ENCODE measurements at regions of chr19 and their contacts with region 1.

Region 1: DNA sequence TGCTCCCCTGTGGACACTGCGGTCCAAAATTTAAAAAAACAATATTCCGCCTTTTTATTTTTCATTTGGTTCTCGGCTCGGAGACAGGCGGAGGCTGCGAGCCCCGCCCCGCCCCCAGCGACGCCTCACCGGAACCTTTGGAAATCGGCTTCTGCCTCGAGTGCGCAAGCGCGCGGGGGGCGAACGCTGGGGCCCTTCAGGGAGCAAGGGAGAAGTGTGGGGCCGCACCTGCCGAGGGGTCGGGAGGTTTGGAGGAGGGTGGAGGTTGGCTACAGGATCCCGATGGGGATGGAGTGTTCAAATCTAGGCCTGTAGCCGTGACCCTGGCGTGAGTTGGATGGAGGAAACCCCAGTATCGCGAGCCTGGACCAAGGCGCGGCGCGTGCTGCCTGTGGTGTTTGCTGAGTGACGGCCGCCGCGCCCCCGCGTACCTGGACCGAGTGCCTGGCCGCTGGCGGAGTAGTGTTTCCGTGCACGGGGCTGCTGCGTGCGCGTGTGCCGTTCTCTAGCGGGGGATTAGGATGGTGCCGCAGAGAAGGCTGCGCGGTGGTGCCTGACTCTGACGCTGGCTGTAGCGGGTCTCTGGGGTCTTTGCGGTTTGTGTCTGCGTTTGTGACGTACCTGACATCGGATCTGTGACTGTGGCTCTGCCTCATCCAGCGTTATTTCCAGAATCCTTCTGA is 565 bp upstream of the ZFP30 start:
- DNase-seq: peak; percentile 89
- ATAC-seq: peak; percentile 69
- H3K4me3 ChIP-seq: peak overlapping the region; percentile 36 to 89 (median 80)
- H3K4me3 Mint-ChIP-seq: peak overlapping the region; percentile 98
- H3K27ac ChIP-seq: peak overlapping the region; percentile 91 to 93
- H3K27ac Mint-ChIP-seq: peak overlapping the region; percentile 97
- H3K4me1 ChIP-seq: peaks cover 15 to 19% of the 10 kb centered on the region in 2 donors
- H3K4me1 Mint-ChIP-seq: peaks cover 30% of the 10 kb centered on the region
- H3K27me3 ChIP-seq: no peaks in the 10 kb centered on the region
- H3K27me3 Mint-ChIP-seq: no peaks in the 10 kb centered on the region
- CTCF ChIP-seq: no peak

Region 2: GRCh38 chr19:37719111-37719926 is 63.5 kb after region 1 on chr19 and contains the start of gene ZNF607:
- CTCF ChIA-PET with region 1: no interaction called
- POLR2A ChIA-PET with region 1: no interaction called
- intact Hi-C with region 1: loop called (anchors 1 kb)
- DNase-seq: peak; percentile 94
- ATAC-seq: peak; percentile 95
- H3K4me3 ChIP-seq: peak within 1 kb of the TSS; percentile 51 to 86 (median 82)
- H3K4me3 Mint-ChIP-seq: peak within 1 kb of the TSS; percentile 90
- H3K27ac ChIP-seq: peak within 1 kb of the TSS; percentile 62 to 68
- H3K27ac Mint-ChIP-seq: peak within 1 kb of the TSS; percentile 89
- H3K4me1 ChIP-seq: peaks cover 7 to 12% of the 10 kb centered on the region in 2 donors
- H3K4me1 Mint-ChIP-seq: peaks cover 14% of the 10 kb centered on the region
- H3K27me3 ChIP-seq: no peaks in the 10 kb centered on the region
- H3K27me3 Mint-ChIP-seq: no peaks in the 10 kb centered on the region
- CTCF ChIP-seq: peak; percentile 52
- total RNA-seq, gene ZNF607: 19.4 and 21.5 TPM in 2 replicates

Measured in B cell (primary cell).